Activated CD4-positive, alpha-beta memory T cell treated with anti-CD3 and anti-CD28 coated beads, Interleukin-2, amount 10 ng/mL, durations not matched to agents 7 days and 5 days (primary cell): ENCODE measurements at regions of chr17 and their contacts with region 1.

Region 1: GRCh38 chr17:44029736-44030135 is 15.0 kb upstream of the TMEM101 start:
- DNase-seq: no peak
- H3K4me3 Mint-ChIP-seq: no peak overlapping the region
- H3K27ac Mint-ChIP-seq: no peak overlapping the region
- H3K4me1 Mint-ChIP-seq: peaks cover 31% of the 10 kb centered on the region
- H3K27me3 Mint-ChIP-seq: no peaks in the 10 kb centered on the region

Region 2: DNA sequence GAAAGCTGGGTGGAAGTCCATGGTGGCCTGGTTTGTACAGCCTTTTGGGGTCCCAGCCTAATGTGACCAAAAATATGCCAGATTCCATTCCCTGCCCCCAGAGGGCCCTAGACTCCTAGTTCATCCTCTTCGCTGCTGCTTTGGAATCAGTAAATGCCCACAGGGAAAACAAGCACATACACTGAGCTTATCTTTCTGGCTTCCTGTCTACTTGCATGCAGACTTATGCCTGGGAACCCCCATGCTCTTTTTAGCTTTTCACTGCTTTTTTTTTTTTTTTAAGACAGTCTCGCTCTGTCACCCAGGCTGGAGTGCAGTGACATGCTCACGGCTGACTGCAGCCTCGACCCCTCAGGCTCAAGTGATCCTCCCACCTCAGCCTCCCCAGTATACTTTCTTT is 188.9 kb before region 1 on chr17:
- CTCF ChIA-PET with region 1: no interaction called
- POLR2A ChIA-PET with region 1: no interaction called
- DNase-seq: no peak
- H3K4me3 Mint-ChIP-seq: no peak overlapping the region
- H3K27ac Mint-ChIP-seq: no peak overlapping the region
- H3K4me1 Mint-ChIP-seq: no peaks in the 10 kb centered on the region
- H3K27me3 Mint-ChIP-seq: peaks cover 22% of the 10 kb centered on the region

Region 3: DNA sequence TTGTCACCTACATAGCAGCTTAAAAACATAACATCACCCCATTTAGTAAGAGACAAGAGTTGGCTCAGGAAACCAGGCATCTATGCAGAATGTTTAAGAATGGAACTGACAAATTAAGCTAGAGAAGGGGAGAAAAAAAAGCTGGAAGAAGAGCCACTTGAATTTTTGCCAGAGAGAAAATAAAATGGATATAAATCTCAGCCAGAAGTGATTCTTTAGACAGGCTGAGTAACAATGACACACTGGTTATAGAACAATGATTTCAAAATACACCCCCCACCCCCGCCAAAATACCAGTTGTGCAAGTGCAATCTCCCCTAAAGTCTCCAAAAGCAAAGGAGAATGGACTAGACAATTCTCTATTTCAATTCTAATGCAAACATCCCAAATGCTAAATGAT is 14.3 kb after region 1 on chr17:
- CTCF ChIA-PET with region 1: interaction called, 14 read pairs
- POLR2A ChIA-PET with region 1: interaction called, 5 read pairs
- DNase-seq: no peak
- H3K4me3 Mint-ChIP-seq: no peak overlapping the region
- H3K27ac Mint-ChIP-seq: no peak overlapping the region
- H3K4me1 Mint-ChIP-seq: peaks cover 35% of the 10 kb centered on the region
- H3K27me3 Mint-ChIP-seq: no peaks in the 10 kb centered on the region

Region 4: GRCh38 chr17:44071198-44071669 is 41.5 kb after region 1 on chr17:
- CTCF ChIA-PET with region 1: no interaction called
- POLR2A ChIA-PET with region 1: no interaction called
- DNase-seq: no peak
- H3K4me3 Mint-ChIP-seq: peak overlapping the region; percentile 88
- H3K27ac Mint-ChIP-seq: peak overlapping the region; percentile 85
- H3K4me1 Mint-ChIP-seq: peaks cover 36% of the 10 kb centered on the region
- H3K27me3 Mint-ChIP-seq: no peaks in the 10 kb centered on the region